ENCODE measurements at regions of chr10 and their contacts with region 1.

Region 1: GRCh38 chr10:24503461-24504320 is 220.0 kb downstream of the ARHGAP21 start:
- ATAC-seq: peak in 4 of 8 experiments; percentile 37 to 75 (median 60)
- H3K4me3 ChIP-seq: no peak overlapping the region
- H3K27ac ChIP-seq: no peak overlapping the region
- H3K4me1 ChIP-seq: no peaks in the 10 kb centered on the region

Region 2: GRCh38 chr10:23314835-23315239 is 1188.9 kb before region 1 on chr10:
- in situ Hi-C with region 1: loop called in 1 of 9 experiments (anchors 25 kb)
- ATAC-seq: peak in 5 of 8 experiments; percentile 21 to 80 (median 60)
- H3K4me3 ChIP-seq: no peak overlapping the region
- H3K27ac ChIP-seq: no peak overlapping the region
- H3K4me1 ChIP-seq: no peaks in the 10 kb centered on the region

Region 3: GRCh38 chr10:23994479-23995046 is 509.1 kb before region 1 on chr10:
- in situ Hi-C with region 1: loop called in 4 of 9 experiments (anchors 25 kb)
- ATAC-seq: peak in 4 of 8 experiments; percentile 33 to 76 (median 72)
- H3K4me3 ChIP-seq: no peak overlapping the region
- H3K27ac ChIP-seq: no peak overlapping the region
- H3K4me1 ChIP-seq: no peaks in the 10 kb centered on the region

Region 4: GRCh38 chr10:24209946-24210491 is 293.7 kb before region 1 on chr10:
- in situ Hi-C with region 1: loop called in 2 of 9 experiments (anchors 25 kb)
- ATAC-seq: peak; percentile 4 to 75 (median 41)
- H3K4me3 ChIP-seq: peak overlapping the region; percentile 15 to 39 (median 25)
- H3K27ac ChIP-seq: peak overlapping the region in 1 of 2 donors; percentile 22
- H3K4me1 ChIP-seq: peaks cover 12 to 21% of the 10 kb centered on the region in 2 donors

Region 5: DNA sequence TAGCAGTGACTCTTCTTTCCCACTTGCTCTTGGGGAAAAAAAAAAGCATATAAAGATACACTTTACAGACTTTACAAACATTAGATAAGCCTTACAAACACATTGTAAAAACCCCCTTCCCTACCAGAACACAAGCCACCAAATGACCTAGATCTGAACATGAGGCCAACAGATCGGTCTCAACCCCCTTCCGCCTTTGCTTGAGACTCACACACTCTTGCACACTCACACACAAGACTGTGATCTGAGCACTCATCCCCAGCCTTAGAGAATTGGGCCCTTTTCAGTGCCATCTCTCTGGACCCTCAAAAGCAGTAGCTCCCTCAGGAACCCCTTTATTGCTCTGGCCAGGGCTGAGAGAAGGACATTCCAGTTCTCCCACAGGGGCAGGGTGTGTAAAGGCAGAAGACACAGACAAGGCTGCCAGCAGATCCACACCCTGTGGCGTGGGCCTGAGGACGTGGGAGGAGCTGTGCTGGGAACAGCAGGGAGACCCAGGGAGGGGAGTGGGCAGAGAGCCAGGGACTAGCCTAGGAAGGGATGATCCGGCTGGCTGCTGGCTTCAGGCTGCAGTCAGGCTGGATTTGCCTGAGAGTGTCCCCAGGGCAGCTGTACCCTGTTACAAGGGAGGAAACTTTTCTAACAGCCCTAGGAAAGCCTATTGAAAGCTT is 88.1 kb before region 1 on chr10:
- in situ Hi-C with region 1: no loop called
- ATAC-seq: peak; percentile 42 to 98 (median 86)
- H3K4me3 ChIP-seq: no peak overlapping the region
- H3K27ac ChIP-seq: no peak overlapping the region
- H3K4me1 ChIP-seq: no peaks in the 10 kb centered on the region